Activated CD8-positive, alpha-beta T cell treated with anti-CD3 and anti-CD28 coated beads, Interleukin-2, amount 10 ng/mL, durations not matched to agents 7 days and 5 days (primary cell): ENCODE measurements at regions of chr1 and their contacts with region 1.

Region 1: GRCh38 chr1:44652445-44653106 is 21.7 kb downstream of the TMEM53 start:
- DNase-seq: peak; percentile 79
- ATAC-seq: peak; percentile 91
- H3K4me3 Mint-ChIP-seq: no peak overlapping the region
- H3K27ac Mint-ChIP-seq: no peak overlapping the region
- H3K4me1 Mint-ChIP-seq: no peaks in the 10 kb centered on the region
- H3K27me3 Mint-ChIP-seq: no peaks in the 10 kb centered on the region

Region 2: DNA sequence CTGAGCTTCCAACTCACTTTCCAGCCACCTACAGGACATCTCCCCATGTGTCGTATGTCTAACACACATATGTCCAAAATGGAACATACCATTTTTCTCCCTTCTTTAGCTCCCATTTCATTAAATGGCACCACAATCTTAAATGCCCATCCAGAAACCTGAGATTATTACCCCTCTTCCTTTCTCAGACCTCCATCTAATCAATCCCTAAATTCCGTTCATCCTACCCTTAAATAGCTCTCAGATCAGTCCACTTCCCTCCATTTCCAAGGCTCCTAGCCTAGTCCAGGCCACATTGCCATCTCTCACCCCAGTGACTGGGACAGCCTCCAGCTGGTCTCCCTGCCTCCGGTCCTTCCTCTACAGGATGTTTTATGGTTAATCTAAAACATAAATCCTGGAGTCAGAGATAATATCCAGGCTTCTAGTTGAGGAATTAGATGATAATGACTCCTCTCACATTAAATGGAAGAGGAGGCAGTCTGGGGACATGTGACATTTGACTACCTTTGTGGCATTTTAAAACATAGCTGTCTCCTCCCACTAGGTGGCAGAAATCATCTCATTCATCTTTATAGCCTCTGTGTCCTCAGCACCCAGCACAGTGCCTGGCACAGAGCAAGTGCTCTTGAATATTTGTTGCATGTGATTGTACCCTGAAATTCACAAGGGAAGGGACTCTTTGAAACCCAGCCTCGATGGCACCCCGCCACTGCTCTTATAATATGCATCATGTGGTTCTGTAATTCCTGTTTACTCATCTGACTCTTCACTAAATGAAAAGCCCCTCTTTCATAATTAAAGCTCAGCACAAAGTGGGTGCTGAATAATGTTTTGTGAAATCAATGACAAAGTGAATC is 80.6 kb before region 1 on chr1:
- CTCF ChIA-PET with region 1: interaction called, 72 read pairs
- POLR2A ChIA-PET with region 1: no interaction called
- DNase-seq: peak; percentile 42
- ATAC-seq: peak; percentile 75
- H3K4me3 Mint-ChIP-seq: no peak overlapping the region
- H3K27ac Mint-ChIP-seq: no peak overlapping the region
- H3K4me1 Mint-ChIP-seq: no peaks in the 10 kb centered on the region
- H3K27me3 Mint-ChIP-seq: peaks cover 24% of the 10 kb centered on the region

Region 3: DNA sequence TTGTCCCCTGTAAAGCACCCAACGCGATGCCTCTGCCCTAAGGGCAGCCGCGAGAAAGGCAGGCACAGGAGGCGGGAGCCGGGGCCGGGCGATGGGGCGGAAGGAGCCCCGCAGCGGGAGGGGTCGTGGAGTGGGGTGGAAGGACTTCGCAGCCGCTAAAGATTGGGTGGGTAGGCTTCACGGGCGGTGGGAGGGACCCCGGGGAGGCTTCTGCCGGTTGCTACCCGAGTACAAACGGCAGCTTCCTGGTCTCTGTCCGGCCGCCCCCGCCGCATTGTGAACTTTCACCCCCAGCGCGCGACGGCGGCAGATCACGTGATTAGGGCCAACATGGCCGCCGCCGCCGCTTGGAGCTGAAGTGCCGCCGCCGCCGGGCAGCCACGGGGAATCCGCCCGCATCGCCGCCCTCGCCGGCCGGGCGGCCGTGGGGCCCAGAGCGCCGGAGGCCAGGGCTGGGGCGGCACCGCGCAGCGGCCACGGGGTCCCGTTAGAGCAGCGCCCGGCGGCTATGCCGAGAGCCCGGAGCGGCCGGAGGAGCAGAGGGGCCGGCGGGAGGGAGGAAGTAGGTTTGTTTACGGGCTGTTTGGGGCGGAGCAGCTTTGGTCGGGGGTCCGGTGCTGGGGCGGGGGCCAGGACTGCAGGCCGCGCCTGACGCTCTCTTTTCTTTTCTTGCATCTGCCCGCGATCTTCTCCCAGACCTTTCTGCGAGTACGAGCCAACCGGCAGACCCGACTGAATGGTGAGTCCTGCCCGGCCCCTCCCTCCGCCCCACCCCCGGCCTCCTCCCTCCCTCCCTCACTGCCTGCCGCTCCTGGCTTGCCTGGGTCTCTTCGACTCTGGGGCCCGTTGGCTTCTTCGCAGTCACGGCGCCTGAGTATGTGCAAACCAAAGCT is 20.7 kb before region 1 on chr1:
- CTCF ChIA-PET with region 1: interaction called, 59 read pairs
- POLR2A ChIA-PET with region 1: interaction called, 17 read pairs
- DNase-seq: peak; percentile 94
- ATAC-seq: peak; percentile 86
- H3K4me3 Mint-ChIP-seq: peak overlapping the region; percentile 88
- H3K27ac Mint-ChIP-seq: peak overlapping the region; percentile 97
- H3K4me1 Mint-ChIP-seq: peaks cover 27% of the 10 kb centered on the region
- H3K27me3 Mint-ChIP-seq: no peaks in the 10 kb centered on the region

Region 4: GRCh38 chr1:44674113-44675000 is 21.8 kb after region 1 on chr1 and contains the starts of genes ARMH1 and TMEM53:
- CTCF ChIA-PET with region 1: interaction called, 42 read pairs
- POLR2A ChIA-PET with region 1: interaction called, 3 read pairs
- DNase-seq: peak; percentile 99
- ATAC-seq: peak; percentile 97
- H3K4me3 Mint-ChIP-seq: peak within 1 kb of the TSS; percentile 83
- H3K27ac Mint-ChIP-seq: peak within 1 kb of the TSS; percentile 87
- H3K4me1 Mint-ChIP-seq: peaks cover 28% of the 10 kb centered on the region
- H3K27me3 Mint-ChIP-seq: no peaks in the 10 kb centered on the region
- total RNA-seq, gene ARMH1: 80.0 to 88.4 TPM
- total RNA-seq, gene TMEM53: 4.0 to 4.6 TPM

Region 5: GRCh38 chr1:44696789-44697345 is 44.3 kb after region 1 on chr1:
- CTCF ChIA-PET with region 1: interaction called, 15 read pairs
- POLR2A ChIA-PET with region 1: no interaction called
- DNase-seq: peak; percentile 71
- ATAC-seq: peak; percentile 94
- H3K4me3 Mint-ChIP-seq: peak overlapping the region; percentile 42
- H3K27ac Mint-ChIP-seq: peak overlapping the region; percentile 89
- H3K4me1 Mint-ChIP-seq: peaks cover 31% of the 10 kb centered on the region
- H3K27me3 Mint-ChIP-seq: no peaks in the 10 kb centered on the region

Region 6: DNA sequence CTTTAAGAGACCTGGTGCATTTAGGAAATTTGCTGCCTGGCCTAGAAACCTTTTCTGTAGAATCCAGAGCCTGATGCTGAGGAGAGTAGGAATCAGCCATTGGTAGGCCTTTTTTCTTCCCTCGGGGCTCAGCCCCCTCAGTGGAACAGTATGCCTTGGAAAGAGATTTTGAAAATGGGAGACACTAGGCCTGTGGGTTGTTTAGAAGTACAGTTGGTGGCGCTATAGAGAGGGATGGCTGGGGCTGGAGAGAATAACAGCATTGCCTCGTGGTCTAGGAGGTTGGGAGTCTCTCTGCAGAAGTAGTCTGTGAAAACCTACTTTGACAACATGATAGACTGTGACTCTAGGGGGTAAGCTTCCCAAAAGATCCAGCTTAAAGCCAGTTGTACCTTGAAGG is 95.3 kb after region 1 on chr1:
- CTCF ChIA-PET with region 1: no interaction called
- POLR2A ChIA-PET with region 1: no interaction called
- DNase-seq: no peak
- ATAC-seq: no peak
- H3K4me3 Mint-ChIP-seq: no peak overlapping the region
- H3K27ac Mint-ChIP-seq: no peak overlapping the region
- H3K4me1 Mint-ChIP-seq: peaks cover 32% of the 10 kb centered on the region
- H3K27me3 Mint-ChIP-seq: no peaks in the 10 kb centered on the region